Tibial artery (tissue), 4 donors: ENCODE measurements at regions of chr2 and their contacts with region 1.

Region 1: GRCh38 chr2:197803033-197803444 is 1.4 kb upstream of the PLCL1 start:
- DNase-seq: no peak
- H3K4me3 ChIP-seq: no peak overlapping the region
- H3K27ac ChIP-seq: peak overlapping the region in 1 of 2 donors; percentile 87
- H3K4me1 ChIP-seq: peaks cover 0 to 26% (median 6%) of the 10 kb centered on the region in 4 donors
- H3K27me3 ChIP-seq: no peaks in the 10 kb centered on the region
- CTCF ChIP-seq: peak; percentile 81 to 82

Region 2: DNA sequence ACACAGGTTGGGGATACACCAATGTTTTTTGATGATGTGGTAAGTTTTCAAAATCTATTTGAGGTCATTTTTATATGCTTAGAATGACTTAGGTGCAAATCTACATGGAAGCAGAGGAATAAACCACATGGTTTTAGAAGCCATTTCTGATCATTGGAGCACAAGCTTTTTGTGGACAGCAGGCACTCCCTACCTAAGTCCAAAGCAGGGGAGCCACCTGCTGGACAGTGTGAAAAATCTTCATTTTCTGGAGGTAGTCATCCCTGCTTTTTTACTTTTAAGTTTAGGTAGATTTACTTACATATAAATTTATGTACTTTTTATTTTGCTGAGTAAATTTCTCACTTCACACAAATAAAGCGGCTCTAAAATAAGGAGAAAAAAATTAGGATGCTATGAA is 324.6 kb after region 1 on chr2:
- intact Hi-C with region 1: loop called (anchors 2 kb)
- DNase-seq: peak in 1 of 2 donors; percentile 28
- H3K4me3 ChIP-seq: no peak overlapping the region
- H3K27ac ChIP-seq: no peak overlapping the region
- H3K4me1 ChIP-seq: peaks cover 0 to 9% (median 0%) of the 10 kb centered on the region in 4 donors
- H3K27me3 ChIP-seq: no peaks in the 10 kb centered on the region
- CTCF ChIP-seq: peak; percentile 61 to 76

Region 3: GRCh38 chr2:198296665-198297308 is 493.7 kb after region 1 on chr2:
- intact Hi-C with region 1: loop called (anchors 2 kb)
- DNase-seq: peak in 1 of 2 donors; percentile 30
- H3K4me3 ChIP-seq: no peak overlapping the region
- H3K27ac ChIP-seq: no peak overlapping the region
- H3K4me1 ChIP-seq: no peaks in the 10 kb centered on the region
- H3K27me3 ChIP-seq: no peaks in the 10 kb centered on the region
- CTCF ChIP-seq: peak; percentile 82 to 87